Activated naive CD4-positive, alpha-beta T cell treated with anti-CD3 and anti-CD28 coated beads for 36 hours (primary cell): ENCODE measurements at regions of chrX and their contacts with region 1.

Region 1: GRCh38 chrX:1205680-1206611 is 6.5 kb downstream of the CRLF2 start:
- DNase-seq: peak; percentile 67
- H3K4me3 Mint-ChIP-seq: peak overlapping the region; percentile 72
- H3K27ac Mint-ChIP-seq: peak overlapping the region; percentile 72
- H3K4me1 Mint-ChIP-seq: peaks cover 17% of the 10 kb centered on the region
- H3K27me3 Mint-ChIP-seq: no peaks in the 10 kb centered on the region

Region 2: GRCh38 chrX:1231850-1232465 is 26.0 kb after region 1 on chrX:
- CTCF ChIA-PET with region 1: no interaction called
- intact Hi-C with region 1: loop called (anchors 1 kb)
- DNase-seq: peak; percentile 43
- H3K4me3 Mint-ChIP-seq: peak overlapping the region; percentile 25
- H3K27ac Mint-ChIP-seq: no peak overlapping the region
- H3K4me1 Mint-ChIP-seq: peaks cover 23% of the 10 kb centered on the region
- H3K27me3 Mint-ChIP-seq: no peaks in the 10 kb centered on the region

Region 3: GRCh38 chrX:1442016-1442665 is 236.2 kb after region 1 on chrX:
- CTCF ChIA-PET with region 1: no interaction called
- intact Hi-C with region 1: no loop called
- DNase-seq: no peak
- H3K4me3 Mint-ChIP-seq: no peak overlapping the region
- H3K27ac Mint-ChIP-seq: no peak overlapping the region
- H3K4me1 Mint-ChIP-seq: no peaks in the 10 kb centered on the region
- H3K27me3 Mint-ChIP-seq: no peaks in the 10 kb centered on the region